ENCODE measurements at regions of chr1 and their contacts with region 1.

Region 1: DNA sequence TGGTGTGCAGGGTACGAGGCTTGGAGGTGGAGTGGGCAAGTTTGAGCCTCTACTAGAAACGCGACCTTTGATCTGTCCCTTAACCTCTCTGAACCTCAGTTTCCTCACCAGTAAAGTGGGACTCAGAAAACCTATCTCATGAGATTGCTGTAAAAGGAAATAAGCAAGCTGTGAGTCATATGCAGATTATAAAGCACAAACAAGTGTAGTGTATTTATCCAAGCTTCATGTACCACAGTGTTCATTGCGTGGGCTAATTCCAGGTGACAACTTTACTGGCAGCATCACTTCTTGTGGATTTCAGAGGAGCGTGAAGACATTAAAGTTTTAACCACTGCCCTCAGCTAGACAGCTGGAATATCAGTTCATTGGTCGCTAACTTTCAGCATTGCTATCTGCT is 44.4 kb downstream of the ZNF697 start:
- DNase-seq: no peak
- H3K4me3 Mint-ChIP-seq: no peak overlapping the region
- H3K27ac Mint-ChIP-seq: no peak overlapping the region
- H3K4me1 Mint-ChIP-seq: peaks cover 14% of the 10 kb centered on the region
- H3K27me3 Mint-ChIP-seq: no peaks in the 10 kb centered on the region
- CTCF ChIP-seq: no peak

Region 2: GRCh38 chr1:119372490-119373086 is 231.1 kb before region 1 on chr1:
- CTCF ChIA-PET with region 1: no interaction called
- intact Hi-C with region 1: loop called (anchors 10 kb)
- DNase-seq: peak; percentile 30
- H3K4me3 Mint-ChIP-seq: no peak overlapping the region
- H3K27ac Mint-ChIP-seq: no peak overlapping the region
- H3K4me1 Mint-ChIP-seq: peaks cover 22% of the 10 kb centered on the region
- H3K27me3 Mint-ChIP-seq: peaks cover 51% of the 10 kb centered on the region
- CTCF ChIP-seq: no peak

Region 3: GRCh38 chr1:119549719-119550132 is 54.0 kb before region 1 on chr1:
- CTCF ChIA-PET with region 1: no interaction called
- intact Hi-C with region 1: loop called (anchors 5 kb)
- DNase-seq: peak; percentile 69
- H3K4me3 Mint-ChIP-seq: no peak overlapping the region
- H3K27ac Mint-ChIP-seq: no peak overlapping the region
- H3K4me1 Mint-ChIP-seq: no peaks in the 10 kb centered on the region
- H3K27me3 Mint-ChIP-seq: peaks cover 18% of the 10 kb centered on the region
- CTCF ChIP-seq: peak; percentile 47

Measured in Calu3 (cell line).